Right cardiac atrium (tissue), 5 donors: ENCODE measurements at regions of chr10 and their contacts with region 1.

Region 1: DNA sequence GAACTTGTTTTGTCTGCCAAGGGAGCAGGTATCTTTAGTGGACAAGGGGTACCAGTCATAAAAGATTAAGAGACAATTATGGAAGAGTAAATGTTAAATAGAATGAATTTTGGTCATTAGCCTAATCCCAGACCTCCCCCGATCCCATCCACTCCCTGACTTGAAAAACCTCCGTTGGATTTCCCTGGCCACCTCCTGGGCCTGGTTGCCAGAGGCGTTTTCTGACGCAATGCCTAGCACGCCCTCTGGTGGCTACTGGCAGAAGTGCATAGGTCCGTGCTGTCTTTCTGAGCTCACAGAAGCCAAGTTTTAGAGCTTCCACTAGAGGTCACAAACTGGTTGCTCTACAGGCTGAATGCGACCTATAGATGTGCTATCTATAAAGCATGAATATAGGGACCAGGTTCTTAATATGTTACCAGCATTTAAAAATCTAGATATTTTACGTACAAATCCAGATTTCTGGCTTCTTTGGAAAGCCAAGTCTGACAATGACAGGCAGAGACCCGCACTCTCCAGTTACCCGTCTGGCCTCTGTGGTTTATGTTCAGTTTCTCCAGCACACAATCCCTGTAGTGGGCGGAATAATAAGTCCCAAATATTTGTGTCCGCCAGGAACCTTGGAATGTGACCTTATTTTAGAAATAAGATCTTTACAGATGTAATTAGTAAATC is 39.8 kb downstream of the SPOCK2 start:
- DNase-seq: peak; percentile 89 to 96 (median 96)
- ATAC-seq: peak; percentile 81 to 84
- H3K4me3 ChIP-seq: no peak overlapping the region
- H3K27ac ChIP-seq: no peak overlapping the region
- H3K4me1 ChIP-seq: no peaks in the 10 kb centered on the region
- H3K27me3 ChIP-seq: no peaks in the 10 kb centered on the region

Region 2: GRCh38 chr10:71899665-71900412 is 148.7 kb before region 1 on chr10:
- intact Hi-C with region 1: loop called in 3 of 4 experiments (anchors 5 kb)
- DNase-seq: no peak
- ATAC-seq: no peak
- H3K4me3 ChIP-seq: no peak overlapping the region
- H3K27ac ChIP-seq: no peak overlapping the region
- H3K4me1 ChIP-seq: no peaks in the 10 kb centered on the region
- H3K27me3 ChIP-seq: no peaks in the 10 kb centered on the region

Region 3: GRCh38 chr10:71957546-71958275 is 90.9 kb before region 1 on chr10:
- intact Hi-C with region 1: loop called (anchors 2 to 5 kb)
- DNase-seq: no peak
- ATAC-seq: no peak
- H3K4me3 ChIP-seq: no peak overlapping the region
- H3K27ac ChIP-seq: no peak overlapping the region
- H3K4me1 ChIP-seq: peaks cover 3% of the 10 kb centered on the region
- H3K27me3 ChIP-seq: no peaks in the 10 kb centered on the region

Region 4: DNA sequence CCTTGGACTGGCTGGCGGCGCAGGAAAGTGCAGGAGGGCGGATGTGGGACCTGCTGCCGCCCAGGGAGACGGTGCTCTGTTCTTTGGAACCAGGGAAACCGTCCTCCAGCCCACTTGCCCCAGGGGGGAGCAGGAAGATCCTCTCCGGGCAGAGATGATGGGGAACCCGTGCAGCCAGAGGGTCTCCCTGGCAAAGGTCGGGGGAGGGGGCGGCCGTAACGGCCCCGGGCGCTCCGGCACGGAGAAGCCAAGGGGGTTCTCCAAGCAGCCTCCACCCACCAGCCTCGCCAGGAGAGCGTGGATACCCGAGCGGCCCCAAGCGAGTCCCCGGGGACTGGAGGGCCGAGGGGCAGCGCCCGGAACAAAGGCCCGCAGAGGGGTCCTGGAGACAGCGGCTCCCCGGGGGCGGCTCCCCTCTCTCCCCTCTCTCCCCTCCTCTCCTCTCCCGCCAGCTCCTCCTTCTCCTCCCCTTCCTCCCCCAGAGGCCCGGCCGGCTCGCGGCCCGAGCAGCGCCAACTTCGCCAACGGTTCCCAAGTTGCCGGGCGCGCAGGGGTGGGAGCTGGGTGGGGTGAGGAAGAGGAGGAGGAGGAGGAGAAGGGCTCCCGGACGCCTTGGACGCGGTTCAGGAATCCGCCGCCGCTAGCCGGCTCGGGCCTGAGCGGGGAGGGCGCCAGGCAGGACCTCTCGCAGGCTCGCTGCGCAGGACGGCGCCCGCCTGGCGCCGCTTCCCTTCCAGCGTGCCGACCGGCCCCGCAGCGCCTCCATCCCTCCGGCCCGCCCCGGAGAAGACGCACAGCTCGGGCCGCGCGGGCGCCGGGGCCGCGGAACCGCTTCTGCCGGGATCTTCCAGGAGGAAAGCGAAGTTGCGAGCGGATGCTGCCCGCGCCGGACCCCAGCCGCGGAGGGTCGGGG is 84.6 kb before region 1 on chr10 and contains the start of gene CHST3:
- intact Hi-C with region 1: loop called in 3 of 4 experiments (anchors 2 to 5 kb)
- DNase-seq: peak; percentile 90 to 95 (median 94)
- ATAC-seq: peak; percentile 82 to 89
- H3K4me3 ChIP-seq: peak within 1 kb of the TSS; percentile 78
- H3K27ac ChIP-seq: peak within 1 kb of the TSS; percentile 90
- H3K4me1 ChIP-seq: peaks cover 10% of the 10 kb centered on the region
- H3K27me3 ChIP-seq: no peaks in the 10 kb centered on the region
- total RNA-seq, gene CHST3: 19.8 to 37.0 (median 23.3) TPM

Region 5: GRCh38 chr10:72223743-72224101 is 175.1 kb after region 1 on chr10:
- intact Hi-C with region 1: loop called in 1 of 4 experiments (anchors 5 kb)
- DNase-seq: no peak
- ATAC-seq: peak; percentile 41 to 53
- H3K4me3 ChIP-seq: no peak overlapping the region
- H3K27ac ChIP-seq: peak overlapping the region; percentile 97
- H3K4me1 ChIP-seq: no peaks in the 10 kb centered on the region
- H3K27me3 ChIP-seq: no peaks in the 10 kb centered on the region